Panc1 (cell line): ENCODE measurements at regions of chr6 and their contacts with region 1.

Region 1: DNA sequence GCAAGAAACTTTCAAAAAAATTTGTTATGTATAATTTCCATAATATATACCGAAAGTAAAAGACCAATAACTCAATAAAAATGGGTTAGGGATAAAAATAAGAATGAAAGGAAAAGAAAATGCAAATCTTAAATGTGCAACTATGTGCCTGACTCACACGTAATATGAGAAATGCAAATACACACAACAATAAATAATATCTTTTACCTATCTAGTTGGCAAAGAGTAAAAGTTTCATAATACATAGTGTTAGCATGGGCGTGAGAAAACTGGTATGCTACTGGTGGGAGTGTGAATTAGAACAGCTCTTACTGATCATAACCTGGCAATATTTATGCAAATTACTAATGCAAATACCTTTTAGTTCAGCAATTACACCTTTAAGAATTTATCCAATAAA is 438.5 kb upstream of the CITED2 start:
- DNase-seq: no peak
- ATAC-seq: no peak
- H3K4me3 ChIP-seq: no peak overlapping the region
- H3K27ac ChIP-seq: no peak overlapping the region
- H3K4me1 ChIP-seq: no peaks in the 10 kb centered on the region
- H3K27me3 ChIP-seq: no peaks in the 10 kb centered on the region
- CTCF ChIP-seq: no peak

Region 2: GRCh38 chr6:139801571-139802321 is 11.2 kb before region 1 on chr6:
- CTCF ChIA-PET with region 1: no interaction called
- POLR2A ChIA-PET with region 1: interaction called, 10 read pairs
- in situ Hi-C with region 1: no loop called
- intact Hi-C with region 1: no loop called
- DNase-seq: no peak
- ATAC-seq: no peak
- H3K4me3 ChIP-seq: no peak overlapping the region
- H3K27ac ChIP-seq: no peak overlapping the region
- H3K4me1 ChIP-seq: no peaks in the 10 kb centered on the region
- H3K27me3 ChIP-seq: no peaks in the 10 kb centered on the region
- CTCF ChIP-seq: no peak

Region 3: DNA sequence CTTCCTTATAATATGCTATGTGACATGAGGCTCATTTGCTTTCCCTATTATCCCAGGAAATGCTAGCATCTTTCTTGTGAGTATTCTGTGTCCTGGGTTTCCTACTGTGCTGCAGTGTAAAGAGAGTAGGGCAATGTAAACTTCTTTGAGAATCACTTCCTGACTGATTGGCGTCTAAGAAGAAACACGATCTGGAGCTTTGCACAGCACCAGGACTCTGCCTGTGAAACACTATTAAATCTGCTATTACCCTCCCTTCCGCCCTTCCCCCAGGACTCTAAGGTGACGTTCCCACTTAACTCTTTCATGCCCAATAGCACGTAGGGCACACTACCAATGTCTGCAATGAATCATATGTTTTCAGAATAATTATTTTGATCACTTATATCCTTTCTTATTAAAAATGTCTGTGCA is 168.8 kb after region 1 on chr6:
- CTCF ChIA-PET with region 1: no interaction called
- POLR2A ChIA-PET with region 1: no interaction called
- in situ Hi-C with region 1: no loop called
- intact Hi-C with region 1: no loop called
- DNase-seq: peak; percentile 59
- ATAC-seq: peak; percentile 83
- H3K4me3 ChIP-seq: peak overlapping the region in 1 of 2 experiments; percentile 9; a peak in 1 of 4 replicates
- H3K27ac ChIP-seq: peak overlapping the region; percentile 85
- H3K4me1 ChIP-seq: peaks cover 42% of the 10 kb centered on the region
- H3K27me3 ChIP-seq: no peaks in the 10 kb centered on the region
- CTCF ChIP-seq: no peak